Posterior cingulate gyrus (tissue), 11 donors: ENCODE measurements at regions of chrX and their contacts with region 1.

Region 1: GRCh38 chrX:87664381-87664780 is 146.8 kb downstream of the KLHL4 start:
- DNase-seq: no peak

Region 2: GRCh38 chrX:87338510-87338909 is 325.9 kb before region 1 on chrX:
- intact Hi-C with region 1: loop called (anchors 1 kb)
- DNase-seq: no peak

Region 3: DNA sequence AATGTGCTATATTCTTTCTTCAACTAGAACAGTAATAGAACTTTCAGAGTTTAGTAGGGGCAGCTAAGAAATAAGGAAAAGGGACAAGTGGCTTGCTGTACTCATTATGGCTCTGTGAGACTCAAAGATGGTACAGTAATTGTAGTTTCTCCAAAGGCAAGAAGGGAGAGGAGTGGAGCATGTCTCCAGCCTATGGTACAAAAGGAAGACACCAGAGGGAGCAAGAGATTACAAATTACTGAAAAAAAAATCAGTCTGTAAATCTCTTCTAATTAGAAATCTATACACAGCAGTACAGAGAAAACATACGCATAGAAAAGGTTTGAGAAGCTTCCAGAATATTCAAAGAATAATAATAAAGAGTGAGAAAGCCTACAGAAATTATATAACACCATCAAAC is 85.4 kb before region 1 on chrX:
- intact Hi-C with region 1: loop called (anchors 5 kb)
- DNase-seq: no peak